Heart left ventricle (tissue), 16 donors: ENCODE measurements at regions of chr3 and their contacts with region 1.

Region 1: DNA sequence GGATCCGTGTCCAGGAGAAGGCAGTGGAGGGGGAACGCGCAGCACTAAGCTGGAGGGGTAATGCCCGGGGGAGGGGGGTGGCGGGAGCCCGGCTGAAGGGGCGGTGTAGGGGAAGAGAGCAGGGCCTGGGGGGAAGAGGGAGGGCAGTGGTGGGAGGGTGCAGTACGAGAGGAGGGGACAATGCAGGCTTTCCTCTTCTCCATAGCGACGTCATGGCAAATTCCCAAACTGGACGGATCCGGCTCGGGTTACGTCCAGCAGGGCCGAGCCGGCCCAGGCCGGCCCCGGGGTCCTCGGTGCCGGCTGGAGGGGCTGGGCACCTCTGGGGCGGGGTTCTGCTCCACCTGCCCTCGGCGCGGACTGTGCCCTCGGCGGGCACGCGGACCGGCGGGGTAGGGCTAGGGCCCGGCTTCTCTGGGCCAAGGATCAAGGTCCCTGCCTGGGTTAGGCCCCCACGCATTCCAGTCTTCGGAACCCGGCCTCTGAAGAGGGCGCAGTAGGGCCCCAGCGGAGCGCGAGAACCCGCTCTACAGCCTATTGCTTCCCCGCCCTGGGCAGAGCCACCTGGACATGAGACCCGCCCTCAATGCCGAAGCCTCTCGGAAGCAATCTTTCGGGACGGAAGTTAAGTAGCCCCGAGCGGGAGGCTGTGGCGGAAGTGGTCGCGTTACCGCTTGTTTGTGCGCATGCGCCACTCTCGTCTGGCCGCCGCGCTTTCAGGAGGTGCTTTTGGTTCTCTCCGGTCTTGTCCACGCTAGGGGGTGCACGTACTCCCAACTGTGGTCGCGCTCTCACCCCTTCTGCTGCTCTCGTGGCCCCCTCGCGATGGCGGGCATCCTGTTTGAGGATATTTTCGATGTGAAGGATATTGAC is 1.4 kb downstream of the POLR2H start:
- DNase-seq: peak; percentile 95 to 97 (median 97)
- ATAC-seq: peak; percentile 77 to 85 (median 79)
- H3K4me3 ChIP-seq: peak overlapping the region; percentile 63 to 100 (median 91)
- H3K27ac ChIP-seq: peak overlapping the region; percentile 97 to 100 (median 100)
- H3K4me1 ChIP-seq: peaks cover 0 to 31% (median 22%) of the 10 kb centered on the region in 12 donors
- H3K27me3 ChIP-seq: no peaks in the 10 kb centered on the region
- CTCF ChIP-seq: peak in 11 of 12 donors; percentile 35 to 80 (median 63)
- POLR2A ChIP-seq: peak in 1 of 2 donors; percentile 83

Region 2: DNA sequence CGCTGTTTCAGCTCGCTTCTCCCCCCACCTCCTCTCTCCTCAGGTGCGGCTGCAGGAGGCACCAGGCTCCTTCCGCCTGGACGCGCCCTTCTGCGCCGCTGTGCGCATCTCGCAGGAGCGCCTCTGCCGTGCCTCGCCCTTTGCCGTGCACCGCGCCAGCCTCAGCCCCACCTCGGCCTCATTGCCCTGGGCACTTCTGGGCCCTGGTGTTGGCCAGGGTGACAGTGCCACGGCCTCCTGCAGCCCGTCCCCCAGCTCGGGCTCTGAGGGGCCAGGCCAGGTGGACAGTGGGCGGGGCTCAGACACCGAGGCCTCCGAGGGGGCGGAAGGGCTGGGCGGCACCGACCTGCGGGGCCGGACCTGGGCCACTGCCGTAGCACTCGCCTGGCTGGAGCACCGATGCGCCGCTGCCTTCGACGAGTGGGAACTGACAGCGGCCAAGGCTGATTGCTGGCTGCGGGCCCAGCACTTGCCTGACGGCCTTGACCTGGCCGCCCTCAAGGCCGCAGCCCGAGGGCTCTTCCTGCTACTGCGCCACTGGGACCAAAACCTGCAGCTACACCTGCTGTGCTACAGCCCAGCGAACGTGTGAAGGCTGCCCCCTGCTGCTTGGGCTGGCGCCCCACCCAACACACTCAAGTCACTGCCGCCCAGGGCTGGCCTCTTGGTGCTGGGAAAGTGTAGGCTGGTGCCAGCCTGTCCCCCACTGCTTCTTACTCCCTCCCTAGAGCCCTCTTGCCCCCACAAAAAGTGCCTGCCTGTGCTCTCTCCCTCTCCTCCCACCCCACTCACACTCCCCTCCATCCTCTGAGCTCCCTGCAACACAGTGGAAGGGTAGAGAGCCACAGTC is 121.2 kb before region 1 on chr3:
- intact Hi-C with region 1: no loop called
- DNase-seq: peak in 2 of 5 donors; percentile 51 to 65
- ATAC-seq: peak; percentile 61 to 77 (median 70)
- H3K4me3 ChIP-seq: no peak overlapping the region
- H3K27ac ChIP-seq: no peak overlapping the region
- H3K4me1 ChIP-seq: peaks cover 0 to 8% (median 5%) of the 10 kb centered on the region in 12 donors
- H3K27me3 ChIP-seq: peaks cover 0 to 3% (median 0%) of the 10 kb centered on the region in 9 donors
- CTCF ChIP-seq: peak in 11 of 12 donors; percentile 29 to 61 (median 46)
- POLR2A ChIP-seq: no peak

Region 3: DNA sequence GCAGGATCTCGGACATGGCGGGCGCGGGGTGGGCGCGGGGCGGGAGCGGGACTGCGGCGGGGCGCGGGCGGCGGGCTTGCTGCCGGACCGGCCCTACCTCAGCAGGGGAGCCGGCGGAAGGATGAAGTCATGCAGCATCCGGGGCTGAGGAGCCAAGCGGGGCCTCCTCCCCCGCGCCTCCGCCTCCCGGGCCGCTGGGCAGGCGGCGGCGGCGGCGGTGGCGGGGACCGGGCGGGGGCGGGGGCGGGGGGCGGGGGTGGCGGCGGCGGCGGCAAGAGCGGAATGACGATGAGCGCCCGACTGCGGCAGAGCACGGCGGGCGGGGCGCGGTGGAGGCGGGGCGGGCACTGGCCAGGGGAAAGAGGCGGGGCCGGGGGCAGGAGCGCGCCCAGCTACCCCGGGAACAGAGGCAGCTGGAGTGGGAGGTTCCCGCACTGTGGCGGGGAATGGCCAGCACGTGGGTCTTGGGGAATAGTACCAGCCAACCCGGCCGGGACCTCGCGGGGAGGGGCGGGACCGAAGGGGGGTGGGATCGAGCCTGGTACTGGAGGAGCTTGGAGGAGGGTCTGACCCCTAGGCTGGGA is 101.5 kb before region 1 on chr3 and contains the start of gene CAMK2N2:
- intact Hi-C with region 1: no loop called
- DNase-seq: peak in 4 of 5 donors; percentile 45 to 77 (median 56)
- ATAC-seq: peak; percentile 18 to 74 (median 70)
- H3K4me3 ChIP-seq: peak within 1 kb of the TSS; percentile 10 to 59 (median 50)
- H3K27ac ChIP-seq: no peak within 1 kb of the TSS
- H3K4me1 ChIP-seq: peaks cover 8 to 35% (median 22%) of the 10 kb centered on the region in 12 donors
- H3K27me3 ChIP-seq: peaks cover 8 to 73% (median 50%) of the 10 kb centered on the region in 9 donors
- CTCF ChIP-seq: no peak
- POLR2A ChIP-seq: no peak
- total RNA-seq, gene CAMK2N2: 0.17 to 0.37 (median 0.29) TPM in 4 of 9 donors, not detected in the others

Region 4: GRCh38 chr3:184305577-184305976 is 57.3 kb before region 1 on chr3:
- intact Hi-C with region 1: loop called in 2 of 10 experiments (anchors 5 to 10 kb)
- DNase-seq: no peak
- ATAC-seq: peak in 1 of 4 donors; percentile 23
- H3K4me3 ChIP-seq: no peak overlapping the region
- H3K27ac ChIP-seq: no peak overlapping the region
- H3K4me1 ChIP-seq: peaks cover 0 to 4% (median 3%) of the 10 kb centered on the region in 12 donors
- H3K27me3 ChIP-seq: no peaks in the 10 kb centered on the region
- CTCF ChIP-seq: peak in 9 of 12 donors; percentile 6 to 39 (median 28)
- POLR2A ChIP-seq: no peak

Region 5: GRCh38 chr3:184380191-184380626 is 17.3 kb after region 1 on chr3:
- intact Hi-C with region 1: no loop called
- DNase-seq: peak; percentile 74 to 87 (median 78)
- ATAC-seq: peak in 3 of 4 donors; percentile 53 to 61 (median 58)
- H3K4me3 ChIP-seq: peak overlapping the region; percentile 28 to 74 (median 54)
- H3K27ac ChIP-seq: peak overlapping the region in 8 of 12 donors; percentile 38 to 79 (median 69)
- H3K4me1 ChIP-seq: peaks cover 0 to 42% (median 27%) of the 10 kb centered on the region in 12 donors
- H3K27me3 ChIP-seq: peaks cover 0 to 60% (median 30%) of the 10 kb centered on the region in 9 donors
- CTCF ChIP-seq: no peak
- POLR2A ChIP-seq: no peak